B cell (primary cell): ENCODE measurements at regions of chr10 and their contacts with region 1.

Region 1: GRCh38 chr10:73785221-73785720 is at the start of gene ZSWIM8:
- DNase-seq: peak; percentile 95
- ATAC-seq: peak; percentile 87
- H3K4me3 ChIP-seq: peak within 1 kb of the TSS; percentile 56 to 97 (median 85)
- H3K4me3 Mint-ChIP-seq: peak within 1 kb of the TSS; percentile 96
- H3K27ac ChIP-seq: peak within 1 kb of the TSS; percentile 53 to 74
- H3K27ac Mint-ChIP-seq: peak within 1 kb of the TSS; percentile 98
- H3K4me1 ChIP-seq: peaks cover 32 to 46% of the 10 kb centered on the region in 2 donors
- H3K4me1 Mint-ChIP-seq: peaks cover 48% of the 10 kb centered on the region
- H3K27me3 ChIP-seq: no peaks in the 10 kb centered on the region
- H3K27me3 Mint-ChIP-seq: no peaks in the 10 kb centered on the region
- CTCF ChIP-seq: no peak
- total RNA-seq, gene ZSWIM8: 110 and 113 TPM in 2 replicates

Region 2: GRCh38 chr10:73439605-73440312 is 345.5 kb before region 1 on chr10:
- CTCF ChIA-PET with region 1: no interaction called
- POLR2A ChIA-PET with region 1: no interaction called
- intact Hi-C with region 1: no loop called
- DNase-seq: no peak
- ATAC-seq: no peak
- H3K4me3 ChIP-seq: no peak overlapping the region
- H3K4me3 Mint-ChIP-seq: no peak overlapping the region
- H3K27ac ChIP-seq: no peak overlapping the region
- H3K27ac Mint-ChIP-seq: no peak overlapping the region
- H3K4me1 ChIP-seq: no peaks in the 10 kb centered on the region
- H3K4me1 Mint-ChIP-seq: no peaks in the 10 kb centered on the region
- H3K27me3 ChIP-seq: no peaks in the 10 kb centered on the region
- H3K27me3 Mint-ChIP-seq: no peaks in the 10 kb centered on the region
- CTCF ChIP-seq: no peak

Region 3: GRCh38 chr10:73495884-73496674 is 289.2 kb before region 1 on chr10 and contains the start of gene PPP3CB:
- CTCF ChIA-PET with region 1: no interaction called
- POLR2A ChIA-PET with region 1: no interaction called
- intact Hi-C with region 1: loop called (anchors 5 kb)
- DNase-seq: peak; percentile 94
- ATAC-seq: peak; percentile 70
- H3K4me3 ChIP-seq: peak within 1 kb of the TSS; percentile 63 to 97 (median 85)
- H3K4me3 Mint-ChIP-seq: peak within 1 kb of the TSS; percentile 94
- H3K27ac ChIP-seq: peak within 1 kb of the TSS; percentile 89 to 93
- H3K27ac Mint-ChIP-seq: peak within 1 kb of the TSS; percentile 96
- H3K4me1 ChIP-seq: peaks cover 30 to 40% of the 10 kb centered on the region in 2 donors
- H3K4me1 Mint-ChIP-seq: peaks cover 52% of the 10 kb centered on the region
- H3K27me3 ChIP-seq: no peaks in the 10 kb centered on the region
- H3K27me3 Mint-ChIP-seq: no peaks in the 10 kb centered on the region
- CTCF ChIP-seq: no peak
- total RNA-seq, gene PPP3CB: 51.2 and 52.8 TPM in 2 replicates

Region 4: GRCh38 chr10:73772280-73773151 is 12.8 kb before region 1 on chr10:
- CTCF ChIA-PET with region 1: interaction called, 35 read pairs
- POLR2A ChIA-PET with region 1: interaction called, 24 read pairs
- intact Hi-C with region 1: loop called (anchors 1 kb)
- DNase-seq: peak; percentile 91
- ATAC-seq: peak; percentile 66
- H3K4me3 ChIP-seq: peak overlapping the region; percentile 66 to 94 (median 89)
- H3K4me3 Mint-ChIP-seq: peak overlapping the region; percentile 97
- H3K27ac ChIP-seq: peak overlapping the region; percentile 85 to 93
- H3K27ac Mint-ChIP-seq: peak overlapping the region; percentile 98
- H3K4me1 ChIP-seq: peaks cover 30 to 47% of the 10 kb centered on the region in 2 donors
- H3K4me1 Mint-ChIP-seq: peaks cover 63% of the 10 kb centered on the region
- H3K27me3 ChIP-seq: no peaks in the 10 kb centered on the region
- H3K27me3 Mint-ChIP-seq: no peaks in the 10 kb centered on the region
- CTCF ChIP-seq: no peak

Region 5: GRCh38 chr10:73886085-73886529 is 100.8 kb after region 1 on chr10:
- CTCF ChIA-PET with region 1: no interaction called
- POLR2A ChIA-PET with region 1: no interaction called
- intact Hi-C with region 1: no loop called
- DNase-seq: peak; percentile 83
- ATAC-seq: peak; percentile 98
- H3K4me3 ChIP-seq: no peak overlapping the region
- H3K4me3 Mint-ChIP-seq: no peak overlapping the region
- H3K27ac ChIP-seq: no peak overlapping the region
- H3K27ac Mint-ChIP-seq: no peak overlapping the region
- H3K4me1 ChIP-seq: peaks cover 4 to 19% of the 10 kb centered on the region in 2 donors
- H3K4me1 Mint-ChIP-seq: peaks cover 9% of the 10 kb centered on the region
- H3K27me3 ChIP-seq: no peaks in the 10 kb centered on the region
- H3K27me3 Mint-ChIP-seq: no peaks in the 10 kb centered on the region
- CTCF ChIP-seq: peak; percentile 85